ENCODE measurements at regions of chr1 and their contacts with region 1.

Region 1: DNA sequence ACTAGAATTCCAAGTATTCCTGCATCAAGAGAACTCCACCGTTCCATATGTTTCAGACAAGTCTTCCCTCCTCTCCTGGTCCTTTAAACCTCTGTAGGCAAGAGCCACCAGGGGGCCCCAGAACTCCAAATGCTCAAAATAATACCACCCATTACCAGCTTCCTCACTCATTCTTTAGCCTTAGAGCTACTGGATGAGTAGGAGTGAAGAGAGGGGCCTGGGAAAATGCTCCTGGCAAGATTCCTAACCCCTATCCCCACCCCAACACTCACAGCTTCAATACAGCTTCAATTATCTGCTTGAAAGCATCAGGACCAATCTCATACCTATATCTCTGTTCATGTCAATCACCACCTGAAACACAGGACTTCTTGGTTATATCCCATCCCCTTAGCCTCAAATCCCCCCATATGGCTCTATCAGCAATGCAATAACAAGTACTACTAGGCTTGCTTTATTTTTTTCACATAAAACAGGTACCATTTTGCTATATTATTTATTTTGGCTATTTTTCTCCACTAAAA is 9.7 kb downstream of the TOR1AIP2 start:
- DNase-seq: no peak
- ATAC-seq: peak; percentile 89
- H3K4me3 ChIP-seq: no peak overlapping the region
- H3K27ac ChIP-seq: no peak overlapping the region
- H3K4me1 ChIP-seq: no peaks in the 10 kb centered on the region
- H3K27me3 ChIP-seq: no peaks in the 10 kb centered on the region
- CTCF ChIP-seq: peak; percentile 72 to 82 (median 79)
- EP300 ChIP-seq: no peak
- POLR2A ChIP-seq: no peak
- RAD21 ChIP-seq: peak; percentile 92

Region 2: GRCh38 chr1:179840107-179840506 is 27.8 kb before region 1 on chr1:
- CTCF ChIA-PET with region 1: interaction called, 10 read pairs
- POLR2A ChIA-PET with region 1: no interaction called
- RAD21 ChIA-PET with region 1: no interaction called
- SMC1A ChIA-PET with region 1: no interaction called
- in situ Hi-C with region 1: no loop called
- intact Hi-C with region 1: no loop called
- DNase-seq: no peak
- ATAC-seq: no peak
- H3K4me3 ChIP-seq: no peak overlapping the region
- H3K27ac ChIP-seq: no peak overlapping the region
- H3K4me1 ChIP-seq: no peaks in the 10 kb centered on the region
- H3K27me3 ChIP-seq: no peaks in the 10 kb centered on the region
- CTCF ChIP-seq: no peak
- EP300 ChIP-seq: no peak
- POLR2A ChIP-seq: no peak
- RAD21 ChIP-seq: no peak

Region 3: DNA sequence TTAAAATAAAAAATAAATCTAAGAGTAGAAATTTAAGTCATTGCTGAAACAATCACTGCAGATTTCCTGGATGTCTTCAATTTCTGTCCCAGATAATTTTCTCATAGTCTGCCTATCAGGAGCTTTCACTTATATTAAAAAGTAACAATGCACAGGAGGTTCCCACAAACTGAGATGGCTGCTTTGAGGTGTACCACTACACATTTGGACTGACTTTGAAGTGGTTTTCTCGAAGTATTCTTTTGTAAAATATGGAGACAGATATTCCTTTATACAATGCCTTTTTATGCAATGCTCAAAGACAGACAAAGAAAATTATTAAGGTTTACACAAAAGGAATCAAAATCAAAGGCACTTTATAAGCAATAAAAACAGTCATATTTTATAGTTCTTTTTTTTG is 14.8 kb before region 1 on chr1:
- CTCF ChIA-PET with region 1: interaction called, 11 read pairs
- POLR2A ChIA-PET with region 1: no interaction called
- RAD21 ChIA-PET with region 1: no interaction called
- SMC1A ChIA-PET with region 1: interaction called, 7 read pairs
- in situ Hi-C with region 1: no loop called
- intact Hi-C with region 1: no loop called
- DNase-seq: no peak
- ATAC-seq: no peak
- H3K4me3 ChIP-seq: no peak overlapping the region
- H3K27ac ChIP-seq: no peak overlapping the region
- H3K4me1 ChIP-seq: no peaks in the 10 kb centered on the region
- H3K27me3 ChIP-seq: no peaks in the 10 kb centered on the region
- CTCF ChIP-seq: no peak
- EP300 ChIP-seq: no peak
- POLR2A ChIP-seq: no peak
- RAD21 ChIP-seq: no peak

Region 4: GRCh38 chr1:179882243-179883039 is 14.6 kb after region 1 on chr1 and contains the start of gene TOR1AIP1:
- CTCF ChIA-PET with region 1: interaction called, 19 read pairs
- POLR2A ChIA-PET with region 1: interaction called, 3 read pairs
- RAD21 ChIA-PET with region 1: interaction called, 3 read pairs
- SMC1A ChIA-PET with region 1: interaction called, 5 read pairs
- in situ Hi-C with region 1: no loop called
- intact Hi-C with region 1: no loop called
- DNase-seq: peak; percentile 97
- ATAC-seq: peak; percentile 84
- H3K4me3 ChIP-seq: peak within 1 kb of the TSS; percentile 93
- H3K27ac ChIP-seq: peak within 1 kb of the TSS; percentile 96
- H3K4me1 ChIP-seq: peaks cover 8% of the 10 kb centered on the region; the same call in 1 of the 2 replicates
- H3K27me3 ChIP-seq: no peaks in the 10 kb centered on the region
- CTCF ChIP-seq: peak; percentile 5 to 36 (median 29); a peak in 3 of 6 replicates
- EP300 ChIP-seq: peak; percentile 64 to 92
- POLR2A ChIP-seq: peak; percentile 97
- RAD21 ChIP-seq: peak; percentile 28
- polyA plus RNA-seq, gene TOR1AIP1: 16.4 to 19.0 TPM

Region 5: DNA sequence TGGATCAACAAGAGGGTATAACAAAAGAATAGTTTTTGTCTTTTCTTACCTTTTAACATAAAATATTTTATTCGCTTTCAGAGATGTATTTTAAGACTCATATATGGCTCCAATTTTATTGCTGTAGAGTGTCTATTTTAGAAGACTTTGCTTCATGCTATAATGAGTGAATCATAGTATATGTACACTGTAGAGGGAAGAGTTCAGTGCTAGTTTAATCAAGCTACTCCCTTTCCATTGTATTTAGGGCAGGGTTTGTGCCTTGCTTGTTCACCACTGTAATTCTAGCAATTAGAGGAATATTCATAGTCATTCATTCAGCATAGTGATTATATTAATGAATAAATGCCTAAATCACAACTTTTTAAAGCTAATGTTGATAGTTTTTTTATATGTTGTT is 165.5 kb after region 1 on chr1:
- CTCF ChIA-PET with region 1: interaction called, 11 read pairs
- POLR2A ChIA-PET with region 1: no interaction called
- RAD21 ChIA-PET with region 1: interaction called, 6 read pairs
- SMC1A ChIA-PET with region 1: interaction called, 6 read pairs
- in situ Hi-C with region 1: no loop called
- intact Hi-C with region 1: loop called (anchors 5 kb)
- DNase-seq: no peak
- ATAC-seq: no peak
- H3K4me3 ChIP-seq: no peak overlapping the region
- H3K27ac ChIP-seq: no peak overlapping the region
- H3K4me1 ChIP-seq: no peaks in the 10 kb centered on the region
- H3K27me3 ChIP-seq: no peaks in the 10 kb centered on the region
- CTCF ChIP-seq: no peak
- EP300 ChIP-seq: no peak
- POLR2A ChIP-seq: no peak
- RAD21 ChIP-seq: no peak

Region 6: GRCh38 chr1:180168786-180169639 is 301.1 kb after region 1 on chr1:
- CTCF ChIA-PET with region 1: interaction called, 9 read pairs
- POLR2A ChIA-PET with region 1: no interaction called
- RAD21 ChIA-PET with region 1: interaction called, 5 read pairs
- SMC1A ChIA-PET with region 1: interaction called, 3 read pairs
- in situ Hi-C with region 1: no loop called
- intact Hi-C with region 1: loop called (anchors 1 kb)
- DNase-seq: no peak
- ATAC-seq: peak; percentile 96
- H3K4me3 ChIP-seq: no peak overlapping the region
- H3K27ac ChIP-seq: no peak overlapping the region
- H3K4me1 ChIP-seq: no peaks in the 10 kb centered on the region
- H3K27me3 ChIP-seq: no peaks in the 10 kb centered on the region
- CTCF ChIP-seq: peak; percentile 56 to 70 (median 58)
- EP300 ChIP-seq: no peak
- POLR2A ChIP-seq: no peak
- RAD21 ChIP-seq: peak; percentile 51

Region 7: DNA sequence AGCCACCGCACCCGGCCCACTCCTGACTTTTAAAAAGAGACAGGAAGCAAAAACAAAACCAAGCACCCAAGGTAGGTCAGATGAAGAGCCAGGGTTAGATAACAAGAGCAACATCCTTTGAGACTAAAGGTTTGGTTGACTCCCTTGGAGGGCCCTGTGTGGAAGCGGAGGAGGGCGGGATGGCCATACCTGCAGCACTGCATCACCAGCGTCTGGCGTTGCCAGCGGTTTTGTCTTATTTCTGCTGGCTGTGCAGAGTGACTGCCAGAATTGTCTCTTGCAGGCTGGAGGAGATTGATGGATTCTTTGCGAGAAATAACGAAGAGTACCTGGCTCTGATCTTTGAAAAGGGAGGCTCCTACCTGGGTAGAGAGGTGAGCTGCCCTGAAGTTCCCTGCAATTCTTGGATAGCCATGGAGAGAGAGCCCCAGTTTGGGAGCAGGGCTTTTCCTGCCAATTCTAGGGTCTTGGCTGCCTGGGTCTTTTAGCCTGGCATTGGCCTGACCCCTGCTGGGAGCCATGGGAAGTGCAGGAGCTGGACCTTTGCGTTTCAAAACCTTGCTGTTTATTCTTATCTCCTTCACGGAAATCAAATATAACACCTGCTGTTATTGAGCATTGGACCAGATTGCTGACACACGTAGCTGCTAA is 310.8 kb after region 1 on chr1:
- CTCF ChIA-PET with region 1: interaction called, 91 read pairs
- POLR2A ChIA-PET with region 1: interaction called, 3 read pairs
- RAD21 ChIA-PET with region 1: interaction called, 38 read pairs
- SMC1A ChIA-PET with region 1: interaction called, 17 read pairs
- in situ Hi-C with region 1: loop called (anchors 5 kb)
- intact Hi-C with region 1: loop called (anchors 2 kb)
- DNase-seq: no peak
- ATAC-seq: peak; percentile 82
- H3K4me3 ChIP-seq: no peak overlapping the region
- H3K27ac ChIP-seq: no peak overlapping the region
- H3K4me1 ChIP-seq: no peaks in the 10 kb centered on the region
- H3K27me3 ChIP-seq: no peaks in the 10 kb centered on the region
- CTCF ChIP-seq: peak; percentile 97 to 99 (median 98)
- EP300 ChIP-seq: no peak
- POLR2A ChIP-seq: no peak
- RAD21 ChIP-seq: peak; percentile 97